ENCODE measurements at regions of chr9 and their contacts with region 1.

Region 1: DNA sequence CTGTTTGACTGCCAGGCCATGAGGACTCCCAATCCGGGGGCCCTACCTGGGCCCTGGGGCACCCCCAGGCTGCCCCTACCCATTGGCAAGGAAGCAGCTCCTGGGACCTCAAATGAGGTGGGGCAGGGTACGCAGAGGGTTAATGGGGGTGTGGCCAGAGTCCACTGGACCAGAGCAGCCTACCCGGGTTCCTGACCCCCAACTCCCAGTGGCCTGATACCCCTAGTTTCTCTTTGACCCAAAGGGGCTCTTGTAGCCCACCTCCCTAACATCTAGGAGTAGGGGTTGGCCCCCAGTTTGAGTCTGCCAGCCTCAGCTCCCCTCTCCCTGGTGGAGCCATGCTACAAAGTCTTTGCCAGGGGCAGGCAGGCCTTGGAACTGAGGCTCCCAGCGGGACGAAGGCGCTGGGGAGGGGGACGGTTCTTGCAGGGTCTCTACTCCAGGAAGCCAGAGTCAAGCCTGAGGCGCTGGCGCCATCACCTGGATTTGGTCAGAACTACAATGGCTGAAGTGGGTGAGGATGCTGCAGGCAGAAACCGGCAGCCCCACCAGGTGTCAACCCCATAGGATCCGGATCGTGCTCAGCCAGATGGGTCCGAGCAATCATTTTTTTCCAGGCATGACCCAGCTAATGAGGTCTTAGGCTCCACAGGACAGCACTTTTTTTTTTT is 8.4 kb upstream of the CERCAM start:
- DNase-seq: peak in 2 of 5 donors; percentile 26 to 35
- ATAC-seq: peak in 3 of 4 donors; percentile 28 to 65 (median 49)
- H3K4me3 ChIP-seq: no peak overlapping the region
- H3K27ac ChIP-seq: no peak overlapping the region
- H3K4me1 ChIP-seq: peaks cover 0 to 13% (median 0%) of the 10 kb centered on the region in 12 donors
- H3K27me3 ChIP-seq: peaks cover 0 to 60% (median 15%) of the 10 kb centered on the region in 9 donors
- CTCF ChIP-seq: peak; percentile 33 to 68 (median 57)
- POLR2A ChIP-seq: no peak

Region 2: GRCh38 chr9:126874546-126875311 is 1537.5 kb before region 1 on chr9:
- intact Hi-C with region 1: no loop called
- DNase-seq: no peak
- ATAC-seq: peak in 1 of 4 donors; percentile 38
- H3K4me3 ChIP-seq: no peak overlapping the region
- H3K27ac ChIP-seq: no peak overlapping the region
- H3K4me1 ChIP-seq: peaks cover 0 to 10% (median 5%) of the 10 kb centered on the region in 12 donors
- H3K27me3 ChIP-seq: no peaks in the 10 kb centered on the region
- CTCF ChIP-seq: no peak
- POLR2A ChIP-seq: no peak

Region 3: GRCh38 chr9:128296337-128297220 is 115.7 kb before region 1 on chr9:
- intact Hi-C with region 1: loop called in 1 of 10 experiments (anchors 5 kb)
- DNase-seq: no peak
- ATAC-seq: no peak
- H3K4me3 ChIP-seq: no peak overlapping the region
- H3K27ac ChIP-seq: no peak overlapping the region
- H3K4me1 ChIP-seq: peaks cover 0 to 6% (median 0%) of the 10 kb centered on the region in 12 donors
- H3K27me3 ChIP-seq: no peaks in the 10 kb centered on the region
- CTCF ChIP-seq: no peak
- POLR2A ChIP-seq: no peak

Region 4: DNA sequence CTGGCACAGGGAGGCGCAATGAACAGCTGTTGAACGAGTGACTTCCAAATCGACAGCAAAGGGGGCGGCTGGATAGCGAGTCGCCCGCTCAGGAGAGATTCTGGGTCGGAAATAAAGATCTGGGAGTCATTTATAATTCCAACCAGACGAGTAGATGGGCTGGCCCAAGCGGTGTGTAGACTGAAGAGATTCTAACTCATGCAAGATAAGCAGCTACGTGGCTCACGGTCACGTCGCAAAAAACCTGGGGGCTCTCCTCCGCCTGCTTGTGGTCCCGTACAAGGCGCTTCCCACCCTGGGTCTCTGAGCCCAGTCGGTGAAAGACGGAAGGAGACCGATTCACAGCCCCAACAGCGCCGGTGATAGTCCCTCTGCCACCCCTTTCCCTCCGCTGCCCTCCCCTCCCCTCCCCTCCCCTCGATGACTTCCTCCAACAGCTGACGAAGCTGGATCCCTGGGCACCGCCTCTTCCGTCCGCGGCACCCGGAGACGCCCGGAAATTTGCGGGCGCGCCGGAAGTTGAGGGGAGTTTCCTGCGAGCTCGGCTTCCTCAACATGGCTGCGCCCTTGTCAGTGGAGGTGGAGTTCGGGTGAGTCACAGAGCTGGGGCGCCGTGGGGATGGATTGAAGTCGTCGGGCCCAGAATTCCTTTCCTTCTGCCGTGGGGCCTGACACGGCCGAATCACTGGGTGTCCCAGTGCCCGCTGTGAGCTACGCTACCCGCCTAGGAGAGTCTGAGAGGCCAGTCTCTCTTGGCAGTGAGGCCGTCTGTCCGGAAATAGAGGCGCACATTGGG is 41.2 kb before region 1 on chr9 and contains the start of gene URM1:
- intact Hi-C with region 1: loop called in 1 of 10 experiments (anchors 5 kb)
- DNase-seq: peak; percentile 95 to 97 (median 96)
- ATAC-seq: peak; percentile 94 to 99 (median 98)
- H3K4me3 ChIP-seq: peak within 1 kb of the TSS; percentile 62 to 99 (median 89)
- H3K27ac ChIP-seq: peak within 1 kb of the TSS; percentile 89 to 98 (median 94)
- H3K4me1 ChIP-seq: peaks cover 0 to 29% (median 19%) of the 10 kb centered on the region in 12 donors
- H3K27me3 ChIP-seq: no peaks in the 10 kb centered on the region
- CTCF ChIP-seq: no peak
- POLR2A ChIP-seq: peak in 1 of 2 donors; percentile 91
- total RNA-seq, gene URM1: 34.4 to 55.5 (median 45.4) TPM

Region 5: DNA sequence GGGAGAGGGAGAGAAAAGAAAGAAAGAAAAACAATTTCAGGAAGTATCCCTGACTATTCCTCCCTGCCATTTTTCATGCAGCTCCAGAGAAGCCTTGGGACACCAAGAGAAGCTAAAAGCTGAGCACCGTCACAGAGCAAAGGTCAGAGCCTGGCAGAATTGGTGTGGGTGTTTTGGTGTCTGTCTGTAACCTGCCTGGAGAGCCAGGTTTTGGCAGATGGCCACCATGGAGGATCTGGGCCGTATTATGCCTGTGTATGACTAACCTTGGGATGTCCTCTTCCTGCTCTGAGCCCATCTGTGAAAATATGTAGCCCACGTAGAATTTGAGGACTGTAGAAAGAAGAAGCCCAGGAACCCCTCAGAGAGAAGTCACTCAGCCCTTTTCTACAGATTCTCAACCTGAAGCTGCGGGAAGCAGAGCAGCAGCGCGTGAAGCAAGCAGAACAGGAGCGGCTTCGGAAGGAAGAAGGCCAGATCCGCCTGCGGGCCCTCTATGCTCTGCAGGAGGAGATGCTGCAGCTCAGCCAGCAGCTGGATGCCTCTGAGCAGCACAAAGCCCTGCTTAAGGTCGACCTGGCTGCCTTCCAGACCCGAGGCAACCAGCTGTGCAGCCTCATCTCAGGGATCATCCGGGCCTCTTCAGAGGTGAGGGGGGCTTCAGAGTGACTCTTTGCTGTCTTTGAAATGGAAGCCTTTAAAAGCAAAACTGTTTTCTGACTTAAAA is 111.1 kb after region 1 on chr9:
- intact Hi-C with region 1: no loop called
- DNase-seq: peak in 3 of 5 donors; percentile 22 to 57 (median 33)
- ATAC-seq: peak in 3 of 4 donors; percentile 45 to 53 (median 47)
- H3K4me3 ChIP-seq: no peak overlapping the region
- H3K27ac ChIP-seq: peak overlapping the region in 1 of 12 donors; percentile 14
- H3K4me1 ChIP-seq: peaks cover 0 to 9% (median 5%) of the 10 kb centered on the region in 12 donors
- H3K27me3 ChIP-seq: no peaks in the 10 kb centered on the region
- CTCF ChIP-seq: no peak
- POLR2A ChIP-seq: no peak